CD4-positive, alpha-beta T cell (primary cell): ENCODE measurements at regions of chr20 and their contacts with region 1.

Region 1: GRCh38 chr20:4813863-4814695 is 92.4 kb downstream of the PRND start:
- DNase-seq: peak; percentile 42 to 95 (median 60)
- ATAC-seq: peak; percentile 72
- H3K4me3 ChIP-seq: peak overlapping the region; percentile 65
- H3K4me3 Mint-ChIP-seq: peak overlapping the region; percentile 89
- H3K27ac ChIP-seq: peak overlapping the region; percentile 97 to 99
- H3K27ac Mint-ChIP-seq: peak overlapping the region; percentile 98
- H3K4me1 ChIP-seq: peaks cover 76% of the 10 kb centered on the region
- H3K4me1 Mint-ChIP-seq: peaks cover 72% of the 10 kb centered on the region
- H3K27me3 ChIP-seq: no peaks in the 10 kb centered on the region
- H3K27me3 Mint-ChIP-seq: no peaks in the 10 kb centered on the region
- CTCF ChIP-seq: no peak

Region 2: DNA sequence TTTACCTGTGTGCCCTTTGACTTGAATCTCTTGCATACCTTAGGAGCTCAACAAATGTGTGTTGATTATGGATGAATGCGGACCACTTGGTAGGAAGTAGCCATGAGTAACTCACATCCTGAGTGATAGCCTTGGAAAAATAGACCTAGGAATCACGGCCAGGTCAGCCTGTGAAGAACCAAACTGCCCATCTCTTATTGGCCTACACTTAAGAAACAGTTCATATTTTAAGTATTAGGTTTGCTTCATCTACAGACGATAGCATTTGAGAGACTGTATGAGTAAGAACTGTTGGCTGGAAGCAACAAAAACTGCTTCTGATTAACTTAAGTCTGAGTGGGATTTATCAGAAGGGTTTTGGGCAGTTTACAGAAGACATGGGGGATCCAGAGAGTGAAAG is 412.5 kb before region 1 on chr20:
- CTCF ChIA-PET with region 1: no interaction called
- POLR2A ChIA-PET with region 1: no interaction called
- intact Hi-C with region 1: no loop called
- DNase-seq: no peak
- ATAC-seq: no peak
- H3K4me3 ChIP-seq: no peak overlapping the region
- H3K4me3 Mint-ChIP-seq: no peak overlapping the region
- H3K27ac ChIP-seq: no peak overlapping the region
- H3K27ac Mint-ChIP-seq: no peak overlapping the region
- H3K4me1 ChIP-seq: no peaks in the 10 kb centered on the region
- H3K4me1 Mint-ChIP-seq: no peaks in the 10 kb centered on the region
- H3K27me3 ChIP-seq: peaks cover 3 to 20% of the 10 kb centered on the region in 2 experiments
- H3K27me3 Mint-ChIP-seq: peaks cover 59% of the 10 kb centered on the region
- CTCF ChIP-seq: no peak

Region 3: GRCh38 chr20:4802527-4802926 is 11.6 kb before region 1 on chr20:
- CTCF ChIA-PET with region 1: interaction called, 3 read pairs
- POLR2A ChIA-PET with region 1: interaction called, 16 read pairs
- intact Hi-C with region 1: no loop called
- DNase-seq: no peak
- ATAC-seq: no peak
- H3K4me3 ChIP-seq: no peak overlapping the region
- H3K4me3 Mint-ChIP-seq: no peak overlapping the region
- H3K27ac ChIP-seq: no peak overlapping the region
- H3K27ac Mint-ChIP-seq: peak overlapping the region; percentile 14
- H3K4me1 ChIP-seq: peaks cover 10% of the 10 kb centered on the region
- H3K4me1 Mint-ChIP-seq: peaks cover 23% of the 10 kb centered on the region
- H3K27me3 ChIP-seq: no peaks in the 10 kb centered on the region
- H3K27me3 Mint-ChIP-seq: no peaks in the 10 kb centered on the region
- CTCF ChIP-seq: no peak

Region 4: GRCh38 chr20:4869290-4870193 is 55.5 kb after region 1 on chr20:
- CTCF ChIA-PET with region 1: no interaction called
- POLR2A ChIA-PET with region 1: interaction called, 3 read pairs
- intact Hi-C with region 1: loop called in 1 of 2 experiments (anchors 5 kb)
- DNase-seq: peak in 5 of 14 experiments; percentile 4 to 67 (median 44)
- ATAC-seq: peak; percentile 83
- H3K4me3 ChIP-seq: peak overlapping the region; percentile 3
- H3K4me3 Mint-ChIP-seq: peak overlapping the region; percentile 16
- H3K27ac ChIP-seq: no peak overlapping the region
- H3K27ac Mint-ChIP-seq: peak overlapping the region; percentile 69
- H3K4me1 ChIP-seq: peaks cover 5% of the 10 kb centered on the region
- H3K4me1 Mint-ChIP-seq: peaks cover 15% of the 10 kb centered on the region
- H3K27me3 ChIP-seq: no peaks in the 10 kb centered on the region
- H3K27me3 Mint-ChIP-seq: no peaks in the 10 kb centered on the region
- CTCF ChIP-seq: no peak